ENCODE measurements at regions of chr3 and their contacts with region 1.

Region 1: DNA sequence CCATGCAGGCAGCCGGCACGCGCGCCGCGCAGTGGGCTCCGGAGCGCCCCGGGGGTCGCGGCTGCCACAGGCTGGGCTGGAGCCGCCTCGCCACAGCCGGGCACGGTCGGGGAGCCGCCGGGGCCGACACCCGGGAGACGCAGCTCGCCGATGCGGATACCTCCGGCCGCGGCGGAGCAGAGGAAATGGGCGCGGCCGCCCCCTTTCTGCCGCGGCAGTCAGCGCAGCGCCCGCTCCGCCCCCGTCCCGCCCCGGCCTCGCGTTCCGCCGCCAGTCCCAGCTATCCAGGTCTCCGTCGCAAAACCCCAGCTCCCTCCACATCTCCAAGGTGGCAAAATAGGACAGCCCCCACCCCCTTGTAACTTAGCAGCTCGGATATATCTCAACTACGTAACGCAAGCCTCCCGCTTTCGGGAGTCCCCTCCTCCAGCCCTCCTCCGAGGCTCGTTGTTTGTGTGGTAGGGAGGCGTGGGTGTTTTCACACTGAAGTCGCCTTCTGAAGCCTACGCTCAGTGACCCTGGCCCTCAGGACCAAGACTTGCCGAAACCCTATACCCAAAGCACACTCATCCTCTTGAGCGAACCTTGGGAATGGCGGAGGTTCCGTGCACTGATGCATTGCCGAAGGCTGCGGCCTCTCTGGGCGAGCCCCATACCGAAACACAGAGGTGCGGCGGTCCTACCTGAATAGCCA is at the start of gene SH3BP5:
- DNase-seq: peak; percentile 47 to 87 (median 70)
- H3K4me3 ChIP-seq: peak within 1 kb of the TSS; percentile 63 to 97 (median 89)
- H3K27ac ChIP-seq: peak within 1 kb of the TSS; percentile 38 to 97 (median 86)
- H3K27me3 ChIP-seq: no peaks in the 10 kb centered on the region
- CTCF ChIP-seq: peak; percentile 48 to 91 (median 76)
- total RNA-seq, gene SH3BP5: 30.2 to 111 (median 66.8) TPM

Region 2: DNA sequence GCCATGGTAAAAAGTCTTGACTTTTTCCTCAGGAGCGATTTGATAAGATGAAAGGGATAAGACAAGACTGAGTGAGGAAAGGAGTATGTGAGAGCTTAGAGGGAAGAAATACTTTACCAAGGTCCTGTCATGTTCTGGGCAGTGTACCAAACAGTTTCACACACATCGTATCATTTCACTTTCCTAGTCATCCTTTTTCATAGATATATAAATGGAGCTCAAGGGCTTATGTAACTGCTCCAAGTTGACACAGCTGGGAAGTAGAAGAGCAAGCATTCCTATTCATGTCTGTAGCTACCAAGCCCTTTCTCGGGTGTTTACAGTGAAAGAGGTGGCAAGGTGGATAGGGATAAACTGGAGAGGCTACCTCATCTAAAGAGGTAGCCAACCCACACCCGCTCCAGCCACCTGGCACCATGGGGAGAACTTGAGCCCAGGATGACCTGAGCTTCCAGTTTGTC is 324.8 kb before region 1 on chr3:
- intact Hi-C with region 1: no loop called
- DNase-seq: no peak
- H3K4me3 ChIP-seq: no peak overlapping the region
- H3K27ac ChIP-seq: peak overlapping the region in 20 of 59 donors; percentile 12 to 72 (median 41)
- H3K27me3 ChIP-seq: no peaks in the 10 kb centered on the region
- CTCF ChIP-seq: no peak

Region 3: DNA sequence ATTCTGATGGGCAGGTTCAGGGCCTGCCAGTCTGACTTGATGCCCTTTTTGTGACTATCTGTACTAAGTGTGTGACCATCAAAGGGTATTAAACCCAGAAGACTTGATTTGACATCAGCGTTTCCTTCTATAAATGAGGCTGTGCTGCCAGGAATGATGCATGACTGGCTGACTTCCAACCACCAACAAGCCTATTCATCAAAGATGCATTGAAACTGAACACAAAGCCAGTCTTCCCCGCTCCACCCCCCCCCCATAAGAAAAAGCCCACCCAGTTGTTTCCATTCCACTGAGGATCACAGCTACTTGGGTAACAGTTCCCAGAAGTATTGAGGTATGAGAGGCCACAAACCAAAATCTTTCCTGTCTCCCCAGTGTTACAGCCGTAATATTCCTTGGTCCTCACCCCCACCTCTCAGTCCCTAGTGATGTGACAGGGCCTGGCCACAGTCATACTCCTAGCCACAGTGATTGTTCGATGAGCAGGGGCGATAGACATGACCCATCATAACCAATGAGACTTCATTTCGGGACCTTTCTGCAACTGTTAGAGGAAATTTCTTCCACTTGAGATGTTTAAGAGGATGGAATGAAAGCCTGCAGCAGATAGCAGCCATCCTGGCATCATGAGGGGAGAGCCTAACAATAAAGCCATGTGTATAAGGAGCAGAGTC is 22.8 kb before region 1 on chr3:
- intact Hi-C with region 1: loop called in 1 of 2 experiments (anchors 2 kb)
- DNase-seq: peak in 8 of 10 donors; percentile 42 to 86 (median 68)
- H3K4me3 ChIP-seq: peak overlapping the region in 2 of 59 donors; percentile 29 to 35
- H3K27ac ChIP-seq: peak overlapping the region in 58 of 59 donors; percentile 15 to 92 (median 77)
- H3K27me3 ChIP-seq: no peaks in the 10 kb centered on the region
- CTCF ChIP-seq: no peak

Region 4: GRCh38 chr3:15377961-15378791 is 45.6 kb after region 1 on chr3:
- intact Hi-C with region 1: loop called (anchors 2 kb)
- DNase-seq: peak; percentile 91 to 99 (median 95)
- H3K4me3 ChIP-seq: peak overlapping the region in 41 of 59 donors; percentile 1 to 50 (median 32)
- H3K27ac ChIP-seq: peak overlapping the region in 53 of 59 donors; percentile 3 to 87 (median 64)
- H3K27me3 ChIP-seq: no peaks in the 10 kb centered on the region
- CTCF ChIP-seq: peak; percentile 82 to 99 (median 96)

Region 5: GRCh38 chr3:15405448-15406050 is 73.0 kb after region 1 on chr3:
- intact Hi-C with region 1: no loop called
- DNase-seq: peak in 1 of 10 donors; percentile 20
- H3K4me3 ChIP-seq: no peak overlapping the region
- H3K27ac ChIP-seq: no peak overlapping the region
- H3K27me3 ChIP-seq: no peaks in the 10 kb centered on the region
- CTCF ChIP-seq: peak; percentile 44 to 85 (median 68)

Region 6: GRCh38 chr3:15591242-15591641 is 258.7 kb after region 1 on chr3:
- intact Hi-C with region 1: no loop called
- DNase-seq: no peak
- H3K4me3 ChIP-seq: no peak overlapping the region
- H3K27ac ChIP-seq: peak overlapping the region in 1 of 59 donors; percentile 9
- H3K27me3 ChIP-seq: no peaks in the 10 kb centered on the region
- CTCF ChIP-seq: no peak

Measured in dorsolateral prefrontal cortex (tissue), 120 donors.